Left ventricle myocardium superior (tissue), 1 donor: ENCODE measurements at regions of chr11 and their contacts with region 1.

Region 1: GRCh38 chr11:36478700-36479329 is 31.3 kb downstream of the TRAF6 start:
- DNase-seq: no peak
- ATAC-seq: peak; percentile 74

Region 2: DNA sequence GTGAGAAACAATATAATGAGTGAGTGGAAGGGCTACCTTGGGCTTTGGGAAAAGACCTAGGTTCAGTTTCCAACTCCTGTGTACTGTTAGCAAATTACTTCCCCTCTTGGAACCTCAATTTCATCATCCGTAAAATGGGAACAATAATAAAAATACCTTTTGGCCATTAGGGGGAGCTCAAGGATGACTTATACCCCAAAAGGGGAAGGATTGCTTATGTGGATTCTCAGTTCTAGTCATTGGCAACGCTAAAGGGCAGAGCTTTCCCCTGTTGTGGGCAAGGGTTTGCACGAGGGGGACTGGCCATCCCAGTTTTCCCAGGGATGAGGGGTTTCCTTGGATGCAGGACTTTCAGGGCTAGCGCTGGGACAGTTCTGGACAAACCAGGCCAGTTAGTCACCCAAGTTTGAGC is 186.5 kb before region 1 on chr11:
- intact Hi-C with region 1: loop called (anchors 5 kb)
- DNase-seq: no peak
- ATAC-seq: no peak

Region 3: GRCh38 chr11:36306888-36307287 is 171.9 kb before region 1 on chr11:
- intact Hi-C with region 1: loop called (anchors 5 kb)
- DNase-seq: no peak
- ATAC-seq: no peak

Region 4: DNA sequence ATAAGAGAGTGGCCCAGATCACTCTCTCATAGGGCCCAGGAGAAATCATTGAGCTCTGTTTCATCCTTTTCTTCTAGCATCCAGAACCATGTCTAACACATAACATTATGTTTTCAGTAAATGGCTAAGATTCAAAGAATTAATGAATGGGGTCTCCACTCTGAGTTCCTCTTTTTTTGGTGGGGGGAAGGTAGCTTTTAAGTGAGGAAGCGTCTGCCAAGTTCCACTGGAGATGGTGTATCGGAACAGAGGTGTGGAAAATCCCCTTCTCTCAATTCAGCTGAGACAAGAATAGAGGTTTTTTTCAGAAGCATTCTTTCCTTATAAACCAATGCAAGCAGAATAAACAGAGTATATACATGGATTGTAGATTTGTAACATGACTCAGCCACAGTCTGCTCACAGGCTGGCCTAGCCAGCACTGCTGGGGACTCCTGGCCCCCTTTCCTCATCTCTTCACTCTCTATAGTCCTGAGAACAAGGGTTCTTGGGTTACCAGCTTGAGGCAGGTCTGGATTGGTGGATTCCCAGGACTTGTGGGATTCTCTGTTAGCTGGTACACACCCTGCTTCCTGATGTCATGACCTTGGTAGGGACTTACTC is 65.9 kb before region 1 on chr11:
- intact Hi-C with region 1: no loop called
- DNase-seq: no peak
- ATAC-seq: no peak

Region 5: GRCh38 chr11:36431429-36432092 is 47.3 kb before region 1 on chr11:
- intact Hi-C with region 1: no loop called
- DNase-seq: peak; percentile 59
- ATAC-seq: peak; percentile 96

Region 6: GRCh38 chr11:36541001-36541400 is 62.2 kb after region 1 on chr11:
- intact Hi-C with region 1: no loop called
- DNase-seq: no peak
- ATAC-seq: peak; percentile 65